Posterior vena cava (tissue), 2 donors: ENCODE measurements at regions of chrX and their contacts with region 1.

Region 1: GRCh38 chrX:72018277-72019112 is 107.8 kb downstream of the NHSL2 start:
- DNase-seq: peak; percentile 95

Region 2: GRCh38 chrX:71809886-71810285 is 208.6 kb before region 1 on chrX:
- intact Hi-C with region 1: no loop called
- DNase-seq: peak; percentile 38

Region 3: GRCh38 chrX:72126539-72127140 is 108.1 kb after region 1 on chrX:
- intact Hi-C with region 1: loop called (anchors 5 to 10 kb)
- DNase-seq: peak; percentile 95

Region 4: DNA sequence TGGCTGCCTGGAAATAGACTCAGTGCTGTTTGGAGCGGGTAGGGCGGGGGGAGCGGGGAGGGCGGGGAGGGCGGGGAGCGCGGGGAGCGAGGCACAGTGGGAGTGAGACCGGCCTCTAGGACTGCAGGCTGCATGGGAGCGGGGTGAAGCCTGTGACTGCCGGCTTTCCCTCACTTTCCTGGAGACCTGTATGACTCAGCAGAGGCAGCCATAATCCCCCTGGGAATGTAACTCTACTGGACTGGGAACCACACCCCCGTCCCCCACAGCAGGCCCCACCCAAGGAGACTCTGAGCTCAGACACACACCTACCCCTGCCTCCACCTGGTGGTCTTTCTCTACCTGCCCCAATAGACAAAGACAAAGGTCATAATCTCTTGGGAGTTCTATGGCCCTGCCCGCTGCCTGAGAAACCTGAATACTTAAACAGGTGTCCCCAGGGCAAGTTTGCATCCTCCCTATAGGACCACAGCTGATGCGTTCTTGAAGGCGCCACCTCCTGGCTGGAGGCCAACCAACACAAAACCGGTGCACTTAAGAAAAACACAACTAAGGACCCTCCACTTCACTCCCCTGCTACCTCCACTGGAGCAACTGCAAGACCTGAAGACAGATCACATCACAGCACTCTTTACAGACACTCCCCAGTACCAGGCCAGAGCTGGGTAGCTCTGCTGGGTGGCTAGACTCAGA is 536.1 kb after region 1 on chrX:
- intact Hi-C with region 1: no loop called
- DNase-seq: no peak